B cell (primary cell): ENCODE measurements at regions of chr6 and their contacts with region 1.

Region 1: GRCh38 chr6:35240840-35241801 is 18.4 kb upstream of the ZNF76 start:
- DNase-seq: peak; percentile 73
- ATAC-seq: peak; percentile 82
- H3K4me3 ChIP-seq: no peak overlapping the region
- H3K4me3 Mint-ChIP-seq: no peak overlapping the region
- H3K27ac ChIP-seq: no peak overlapping the region
- H3K27ac Mint-ChIP-seq: no peak overlapping the region
- H3K4me1 ChIP-seq: no peaks in the 10 kb centered on the region
- H3K4me1 Mint-ChIP-seq: no peaks in the 10 kb centered on the region
- H3K27me3 ChIP-seq: no peaks in the 10 kb centered on the region
- H3K27me3 Mint-ChIP-seq: no peaks in the 10 kb centered on the region
- CTCF ChIP-seq: peak; percentile 100

Region 2: DNA sequence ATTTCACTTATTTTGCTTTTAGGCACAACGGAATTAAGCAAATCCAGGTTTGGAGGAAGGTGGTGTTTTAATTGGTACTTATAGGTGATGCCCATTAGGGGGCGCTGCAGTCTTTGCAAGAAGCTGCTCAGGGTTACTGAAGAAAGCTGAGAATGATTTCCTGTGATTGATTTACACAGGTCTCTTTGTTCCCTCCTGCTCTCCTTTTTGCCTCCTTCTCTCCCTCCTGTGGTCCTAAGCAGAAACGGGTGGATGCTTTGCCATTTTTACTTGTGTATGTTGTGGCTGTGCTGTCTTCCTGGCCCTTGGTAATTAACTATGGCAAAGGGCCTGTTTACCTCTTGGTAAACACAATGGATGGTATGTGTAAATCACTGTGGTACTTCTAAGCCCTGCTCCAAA is 254.3 kb before region 1 on chr6:
- CTCF ChIA-PET with region 1: interaction called, 25 read pairs
- POLR2A ChIA-PET with region 1: no interaction called
- intact Hi-C with region 1: loop called (anchors 2 kb)
- DNase-seq: peak; percentile 64
- ATAC-seq: no peak
- H3K4me3 ChIP-seq: no peak overlapping the region
- H3K4me3 Mint-ChIP-seq: no peak overlapping the region
- H3K27ac ChIP-seq: no peak overlapping the region
- H3K27ac Mint-ChIP-seq: no peak overlapping the region
- H3K4me1 ChIP-seq: no peaks in the 10 kb centered on the region
- H3K4me1 Mint-ChIP-seq: no peaks in the 10 kb centered on the region
- H3K27me3 ChIP-seq: no peaks in the 10 kb centered on the region
- H3K27me3 Mint-ChIP-seq: no peaks in the 10 kb centered on the region
- CTCF ChIP-seq: peak; percentile 83

Region 3: DNA sequence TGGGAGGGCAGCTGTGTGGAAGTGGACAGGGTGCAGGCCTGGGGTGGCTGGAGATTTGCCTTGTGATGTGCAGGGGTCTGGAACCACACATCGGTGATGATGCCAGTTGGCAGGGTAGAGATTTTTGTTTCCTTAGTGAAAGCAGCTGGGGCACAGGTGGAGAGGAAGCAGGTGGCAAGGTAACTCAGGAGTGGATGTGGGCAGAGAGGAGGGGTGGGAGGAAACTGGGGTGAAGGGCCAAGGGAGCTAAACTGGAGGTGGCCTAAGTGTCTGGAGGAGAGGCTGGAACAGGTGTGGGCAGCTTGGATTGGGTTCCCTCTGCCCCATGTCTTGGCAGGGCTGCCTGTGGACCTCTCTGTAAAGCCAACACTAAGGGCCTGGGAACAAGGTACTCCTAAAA is 32.0 kb before region 1 on chr6:
- CTCF ChIA-PET with region 1: interaction called, 12 read pairs
- POLR2A ChIA-PET with region 1: no interaction called
- intact Hi-C with region 1: no loop called
- DNase-seq: no peak
- ATAC-seq: no peak
- H3K4me3 ChIP-seq: no peak overlapping the region
- H3K4me3 Mint-ChIP-seq: no peak overlapping the region
- H3K27ac ChIP-seq: no peak overlapping the region
- H3K27ac Mint-ChIP-seq: no peak overlapping the region
- H3K4me1 ChIP-seq: peaks cover 5 to 9% of the 10 kb centered on the region in 2 donors
- H3K4me1 Mint-ChIP-seq: peaks cover 6% of the 10 kb centered on the region
- H3K27me3 ChIP-seq: peaks cover 0 to 42% (median 18%) of the 10 kb centered on the region in 4 experiments
- H3K27me3 Mint-ChIP-seq: peaks cover 71% of the 10 kb centered on the region
- CTCF ChIP-seq: no peak

Region 4: DNA sequence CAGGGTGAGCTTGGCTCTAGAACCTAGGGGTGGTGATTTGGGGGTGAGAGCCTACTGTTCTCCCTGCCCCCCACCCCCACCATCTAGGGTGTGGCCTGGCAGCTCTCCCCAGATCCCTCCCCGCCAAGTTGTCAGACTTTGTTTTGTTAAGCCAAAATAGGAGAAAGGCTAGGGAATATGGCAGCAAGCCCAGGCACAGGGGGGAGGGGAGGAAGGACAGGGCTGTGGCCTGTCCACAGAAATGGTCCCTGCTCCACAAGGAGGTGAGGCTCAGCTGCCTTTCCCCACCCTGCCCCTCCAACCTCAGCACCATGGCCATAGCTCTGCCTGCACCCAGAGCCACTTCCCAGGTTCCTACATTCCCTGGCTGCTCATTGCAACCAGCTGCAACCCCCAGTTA is 10.2 kb before region 1 on chr6:
- CTCF ChIA-PET with region 1: interaction called, 29 read pairs
- POLR2A ChIA-PET with region 1: no interaction called
- intact Hi-C with region 1: no loop called
- DNase-seq: no peak
- ATAC-seq: no peak
- H3K4me3 ChIP-seq: no peak overlapping the region
- H3K4me3 Mint-ChIP-seq: no peak overlapping the region
- H3K27ac ChIP-seq: no peak overlapping the region
- H3K27ac Mint-ChIP-seq: no peak overlapping the region
- H3K4me1 ChIP-seq: no peaks in the 10 kb centered on the region
- H3K4me1 Mint-ChIP-seq: no peaks in the 10 kb centered on the region
- H3K27me3 ChIP-seq: no peaks in the 10 kb centered on the region
- H3K27me3 Mint-ChIP-seq: no peaks in the 10 kb centered on the region
- CTCF ChIP-seq: no peak

Region 5: GRCh38 chr6:35264550-35265274 is 23.6 kb after region 1 on chr6:
- CTCF ChIA-PET with region 1: interaction called, 30 read pairs
- POLR2A ChIA-PET with region 1: no interaction called
- intact Hi-C with region 1: no loop called
- DNase-seq: no peak
- ATAC-seq: no peak
- H3K4me3 ChIP-seq: no peak overlapping the region
- H3K4me3 Mint-ChIP-seq: no peak overlapping the region
- H3K27ac ChIP-seq: peak overlapping the region in 1 of 2 donors; percentile 34
- H3K27ac Mint-ChIP-seq: no peak overlapping the region
- H3K4me1 ChIP-seq: peaks cover 21 to 31% of the 10 kb centered on the region in 2 donors
- H3K4me1 Mint-ChIP-seq: peaks cover 51% of the 10 kb centered on the region
- H3K27me3 ChIP-seq: no peaks in the 10 kb centered on the region
- H3K27me3 Mint-ChIP-seq: no peaks in the 10 kb centered on the region
- CTCF ChIP-seq: no peak

Region 6: DNA sequence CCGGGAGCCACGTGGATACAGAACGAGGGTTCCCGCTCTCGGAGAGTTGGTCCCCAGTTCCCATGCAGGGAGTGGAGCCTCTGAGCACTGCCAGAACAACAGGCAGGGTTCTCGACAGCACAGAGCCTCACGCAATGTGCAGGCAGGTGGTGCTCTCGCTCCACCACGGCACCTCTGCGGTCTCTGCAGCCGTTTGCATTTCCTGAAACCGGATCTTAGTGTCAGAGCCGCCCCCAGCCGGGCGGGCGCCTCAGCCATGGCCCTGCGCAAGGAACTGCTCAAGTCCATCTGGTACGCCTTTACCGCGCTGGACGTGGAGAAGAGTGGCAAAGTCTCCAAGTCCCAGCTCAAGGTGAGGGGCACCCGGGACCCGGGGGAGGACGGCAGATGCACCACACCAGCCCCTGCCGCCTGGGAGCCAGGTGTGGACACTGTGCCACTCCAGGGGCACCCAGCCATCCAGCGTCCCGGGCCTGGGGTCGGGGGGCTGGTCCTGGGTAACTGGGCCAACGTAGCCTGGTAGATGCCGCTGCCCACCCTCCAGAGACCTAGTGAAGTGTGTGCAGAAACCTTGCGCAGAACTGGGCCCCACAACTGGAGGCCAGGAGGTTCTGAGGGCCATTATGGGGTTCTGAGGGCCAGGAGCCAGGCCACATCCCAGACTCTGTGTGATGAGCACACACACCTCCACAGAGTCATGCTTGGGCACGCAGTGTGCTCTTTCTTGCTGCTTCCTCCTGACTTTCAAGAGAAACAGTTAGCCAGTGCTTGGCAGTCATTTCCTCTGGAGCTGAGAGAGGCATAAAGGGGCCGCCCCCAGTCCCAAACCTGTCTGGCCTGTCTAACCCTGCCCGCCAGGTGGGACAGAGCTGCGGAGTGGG is 56.7 kb after region 1 on chr6 and contains the start of gene DEF6:
- CTCF ChIA-PET with region 1: no interaction called
- POLR2A ChIA-PET with region 1: no interaction called
- intact Hi-C with region 1: no loop called
- DNase-seq: peak; percentile 91
- ATAC-seq: peak; percentile 74
- H3K4me3 ChIP-seq: peak within 1 kb of the TSS; percentile 79 to 97 (median 95)
- H3K4me3 Mint-ChIP-seq: peak within 1 kb of the TSS; percentile 82
- H3K27ac ChIP-seq: peak within 1 kb of the TSS; percentile 87 to 98
- H3K27ac Mint-ChIP-seq: peak within 1 kb of the TSS; percentile 97
- H3K4me1 ChIP-seq: peaks cover 48 to 54% of the 10 kb centered on the region in 2 donors
- H3K4me1 Mint-ChIP-seq: peaks cover 50% of the 10 kb centered on the region
- H3K27me3 ChIP-seq: no peaks in the 10 kb centered on the region
- H3K27me3 Mint-ChIP-seq: no peaks in the 10 kb centered on the region
- CTCF ChIP-seq: peak; percentile 97
- total RNA-seq, gene DEF6: 105 and 116 TPM in 2 replicates